ENCODE measurements at regions of chr16 and their contacts with region 1.

Region 1: GRCh38 chr16:19717771-19718602 is at the starts of genes IQCK and KNOP1:
- DNase-seq: peak; percentile 92
- ATAC-seq: peak; percentile 94
- H3K4me3 ChIP-seq: peak within 1 kb of the TSS; percentile 74 to 98 (median 98)
- H3K27ac ChIP-seq: peak within 1 kb of the TSS; percentile 74
- H3K4me1 ChIP-seq: peaks cover 27% of the 10 kb centered on the region
- H3K27me3 ChIP-seq: no peaks in the 10 kb centered on the region; a peak in 1 of 5 replicates
- CTCF ChIP-seq: no peak
- EP300 ChIP-seq: peak in 1 of 2 experiments; percentile 57; a peak in 1 of 4 replicates
- POLR2A ChIP-seq: peak; percentile 87 to 95
- RAD21 ChIP-seq: peak; percentile 75
- total RNA-seq, gene IQCK: 7.3 and 11.9 TPM in 2 replicates
- total RNA-seq, gene KNOP1: 57.5 and 80.3 TPM in 2 replicates

Region 2: GRCh38 chr16:19700319-19700781 is 17.6 kb before region 1 on chr16:
- CTCF ChIA-PET with region 1: no interaction called
- POLR2A ChIA-PET with region 1: interaction called, 12 read pairs
- in situ Hi-C with region 1: no loop called
- intact Hi-C with region 1: no loop called
- DNase-seq: peak; percentile 79
- ATAC-seq: peak; percentile 92
- H3K4me3 ChIP-seq: no peak overlapping the region
- H3K27ac ChIP-seq: no peak overlapping the region
- H3K4me1 ChIP-seq: peaks cover 20% of the 10 kb centered on the region
- H3K27me3 ChIP-seq: no peaks in the 10 kb centered on the region
- CTCF ChIP-seq: no peak
- EP300 ChIP-seq: peak in 1 of 2 experiments; percentile 50; a peak in 2 of 4 replicates
- POLR2A ChIP-seq: no peak
- RAD21 ChIP-seq: no peak

Region 3: GRCh38 chr16:19743816-19744159 is 25.8 kb after region 1 on chr16:
- CTCF ChIA-PET with region 1: no interaction called
- POLR2A ChIA-PET with region 1: interaction called, 10 read pairs
- in situ Hi-C with region 1: no loop called
- intact Hi-C with region 1: no loop called
- DNase-seq: no peak
- ATAC-seq: peak; percentile 42
- H3K4me3 ChIP-seq: no peak overlapping the region
- H3K27ac ChIP-seq: no peak overlapping the region
- H3K4me1 ChIP-seq: peaks cover 45% of the 10 kb centered on the region
- H3K27me3 ChIP-seq: no peaks in the 10 kb centered on the region
- CTCF ChIP-seq: no peak
- EP300 ChIP-seq: no peak
- POLR2A ChIP-seq: no peak
- RAD21 ChIP-seq: no peak

Region 4: GRCh38 chr16:19753815-19754643 is 36.0 kb after region 1 on chr16:
- CTCF ChIA-PET with region 1: no interaction called
- POLR2A ChIA-PET with region 1: no interaction called
- in situ Hi-C with region 1: no loop called
- intact Hi-C with region 1: loop called (anchors 5 kb)
- DNase-seq: peak; percentile 39
- ATAC-seq: peak; percentile 46; the same call in 2 of the 3 replicates
- H3K4me3 ChIP-seq: no peak overlapping the region
- H3K27ac ChIP-seq: no peak overlapping the region
- H3K4me1 ChIP-seq: peaks cover 60% of the 10 kb centered on the region
- H3K27me3 ChIP-seq: no peaks in the 10 kb centered on the region
- CTCF ChIP-seq: no peak
- EP300 ChIP-seq: no peak
- POLR2A ChIP-seq: no peak
- RAD21 ChIP-seq: no peak

Region 5: GRCh38 chr16:19783363-19784182 is 65.6 kb after region 1 on chr16:
- CTCF ChIA-PET with region 1: no interaction called
- POLR2A ChIA-PET with region 1: no interaction called
- in situ Hi-C with region 1: no loop called
- intact Hi-C with region 1: no loop called
- DNase-seq: no peak
- ATAC-seq: no peak
- H3K4me3 ChIP-seq: no peak overlapping the region
- H3K27ac ChIP-seq: no peak overlapping the region
- H3K4me1 ChIP-seq: peaks cover 29% of the 10 kb centered on the region
- H3K27me3 ChIP-seq: no peaks in the 10 kb centered on the region
- CTCF ChIP-seq: no peak
- EP300 ChIP-seq: no peak
- POLR2A ChIP-seq: no peak
- RAD21 ChIP-seq: no peak